ENCODE measurements at regions of chr10 and their contacts with region 1.

Region 1: GRCh38 chr10:51389415-51390321 is 309.7 kb downstream of the CSTF2T start:
- DNase-seq: peak; percentile 69 to 79
- H3K4me3 ChIP-seq: no peak overlapping the region
- H3K4me3 Mint-ChIP-seq: no peak overlapping the region
- H3K27ac Mint-ChIP-seq: no peak overlapping the region
- H3K4me1 ChIP-seq: no peaks in the 10 kb centered on the region
- H3K4me1 Mint-ChIP-seq: no peaks in the 10 kb centered on the region
- H3K27me3 ChIP-seq: no peaks in the 10 kb centered on the region
- H3K27me3 Mint-ChIP-seq: peaks cover 2% of the 10 kb centered on the region
- CTCF ChIP-seq: peak; percentile 93 to 97

Region 2: GRCh38 chr10:51422311-51423120 is 32.8 kb after region 1 on chr10:
- CTCF ChIA-PET with region 1: interaction called, 4 read pairs
- POLR2A ChIA-PET with region 1: no interaction called
- intact Hi-C with region 1: loop called (anchors 1 kb)
- DNase-seq: peak in 1 of 2 experiments; percentile 59
- H3K4me3 ChIP-seq: no peak overlapping the region
- H3K4me3 Mint-ChIP-seq: no peak overlapping the region
- H3K27ac Mint-ChIP-seq: no peak overlapping the region
- H3K4me1 ChIP-seq: no peaks in the 10 kb centered on the region
- H3K4me1 Mint-ChIP-seq: no peaks in the 10 kb centered on the region
- H3K27me3 ChIP-seq: no peaks in the 10 kb centered on the region
- H3K27me3 Mint-ChIP-seq: peaks cover 10% of the 10 kb centered on the region
- CTCF ChIP-seq: peak; percentile 75 to 88

Region 3: GRCh38 chr10:51879238-51879637 is 489.6 kb after region 1 on chr10:
- CTCF ChIA-PET with region 1: interaction called, 4 read pairs
- POLR2A ChIA-PET with region 1: no interaction called
- intact Hi-C with region 1: loop called (anchors 1 kb)
- DNase-seq: no peak
- H3K4me3 ChIP-seq: no peak overlapping the region
- H3K4me3 Mint-ChIP-seq: no peak overlapping the region
- H3K27ac Mint-ChIP-seq: no peak overlapping the region
- H3K4me1 ChIP-seq: no peaks in the 10 kb centered on the region
- H3K4me1 Mint-ChIP-seq: no peaks in the 10 kb centered on the region
- H3K27me3 ChIP-seq: no peaks in the 10 kb centered on the region
- H3K27me3 Mint-ChIP-seq: no peaks in the 10 kb centered on the region
- CTCF ChIP-seq: no peak

Region 4: GRCh38 chr10:51892965-51893658 is 503.4 kb after region 1 on chr10:
- CTCF ChIA-PET with region 1: no interaction called
- POLR2A ChIA-PET with region 1: no interaction called
- intact Hi-C with region 1: loop called (anchors 1 kb)
- DNase-seq: peak in 1 of 2 experiments; percentile 35
- H3K4me3 ChIP-seq: no peak overlapping the region
- H3K4me3 Mint-ChIP-seq: no peak overlapping the region
- H3K27ac Mint-ChIP-seq: no peak overlapping the region
- H3K4me1 ChIP-seq: no peaks in the 10 kb centered on the region
- H3K4me1 Mint-ChIP-seq: no peaks in the 10 kb centered on the region
- H3K27me3 ChIP-seq: no peaks in the 10 kb centered on the region
- H3K27me3 Mint-ChIP-seq: peaks cover 6% of the 10 kb centered on the region
- CTCF ChIP-seq: peak; percentile 47 to 80

Region 5: GRCh38 chr10:51960494-51960895 is 570.8 kb after region 1 on chr10:
- CTCF ChIA-PET with region 1: no interaction called
- POLR2A ChIA-PET with region 1: no interaction called
- intact Hi-C with region 1: loop called (anchors 1 kb)
- DNase-seq: peak in 1 of 2 experiments; percentile 59
- H3K4me3 ChIP-seq: no peak overlapping the region
- H3K4me3 Mint-ChIP-seq: no peak overlapping the region
- H3K27ac Mint-ChIP-seq: no peak overlapping the region
- H3K4me1 ChIP-seq: no peaks in the 10 kb centered on the region
- H3K4me1 Mint-ChIP-seq: no peaks in the 10 kb centered on the region
- H3K27me3 ChIP-seq: no peaks in the 10 kb centered on the region
- H3K27me3 Mint-ChIP-seq: peaks cover 31% of the 10 kb centered on the region
- CTCF ChIP-seq: peak; percentile 73 to 78

Region 6: DNA sequence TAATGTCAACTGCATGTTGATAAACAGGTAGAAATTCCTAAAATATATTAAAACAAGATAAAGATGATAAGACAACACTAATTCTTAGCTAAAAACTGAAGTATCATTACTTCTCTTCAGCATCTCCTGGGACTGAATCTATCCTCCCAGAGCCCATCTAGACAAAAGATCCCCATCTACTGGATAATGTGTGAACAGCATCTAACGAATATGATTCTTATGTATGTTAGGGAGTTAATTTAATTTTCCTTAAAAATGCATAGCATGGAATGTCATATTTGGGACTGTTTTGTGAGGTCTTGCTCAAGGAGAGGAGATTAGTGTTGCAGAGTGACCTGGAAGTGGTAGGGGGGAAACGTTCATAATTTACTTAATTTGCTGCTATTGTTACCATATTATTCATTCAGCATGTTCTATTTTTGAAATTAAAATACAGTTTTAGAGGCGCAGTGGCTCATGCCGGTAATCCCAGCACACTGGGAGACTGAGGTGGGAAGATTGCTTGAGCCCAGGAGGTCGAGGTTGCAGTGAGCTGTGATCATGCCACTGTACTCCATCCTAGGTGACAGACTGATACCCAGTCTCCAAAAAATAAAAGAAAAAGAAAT is 614.8 kb after region 1 on chr10:
- CTCF ChIA-PET with region 1: interaction called, 3 read pairs
- POLR2A ChIA-PET with region 1: no interaction called
- intact Hi-C with region 1: loop called (anchors 1 kb)
- DNase-seq: peak in 1 of 2 experiments; percentile 62
- H3K4me3 ChIP-seq: no peak overlapping the region
- H3K4me3 Mint-ChIP-seq: no peak overlapping the region
- H3K27ac Mint-ChIP-seq: no peak overlapping the region
- H3K4me1 ChIP-seq: no peaks in the 10 kb centered on the region
- H3K4me1 Mint-ChIP-seq: peaks cover 6% of the 10 kb centered on the region
- H3K27me3 ChIP-seq: no peaks in the 10 kb centered on the region
- H3K27me3 Mint-ChIP-seq: no peaks in the 10 kb centered on the region
- CTCF ChIP-seq: peak; percentile 80 to 81